ENCODE measurements at regions of chr3 and their contacts with region 1.

Region 1: GRCh38 chr3:190197346-190197763 is 76.7 kb upstream of the P3H2 start:
- DNase-seq: no peak
- H3K4me3 ChIP-seq: no peak overlapping the region
- H3K27ac ChIP-seq: no peak overlapping the region
- H3K4me1 ChIP-seq: no peaks in the 10 kb centered on the region
- H3K27me3 ChIP-seq: no peaks in the 10 kb centered on the region
- CTCF ChIP-seq: no peak

Region 2: GRCh38 chr3:189961525-189962161 is 235.7 kb before region 1 on chr3:
- CTCF ChIA-PET with region 1: no interaction called
- dilution Hi-C with region 1: no loop called
- in situ Hi-C with region 1: loop called (anchors 5 to 10 kb)
- intact Hi-C with region 1: loop called (anchors 1 kb)
- DNase-seq: peak; percentile 82
- H3K4me3 ChIP-seq: no peak overlapping the region
- H3K27ac ChIP-seq: peak overlapping the region; percentile 2
- H3K4me1 ChIP-seq: peaks cover 18% of the 10 kb centered on the region
- H3K27me3 ChIP-seq: no peaks in the 10 kb centered on the region
- CTCF ChIP-seq: peak; percentile 90 to 97

Region 3: DNA sequence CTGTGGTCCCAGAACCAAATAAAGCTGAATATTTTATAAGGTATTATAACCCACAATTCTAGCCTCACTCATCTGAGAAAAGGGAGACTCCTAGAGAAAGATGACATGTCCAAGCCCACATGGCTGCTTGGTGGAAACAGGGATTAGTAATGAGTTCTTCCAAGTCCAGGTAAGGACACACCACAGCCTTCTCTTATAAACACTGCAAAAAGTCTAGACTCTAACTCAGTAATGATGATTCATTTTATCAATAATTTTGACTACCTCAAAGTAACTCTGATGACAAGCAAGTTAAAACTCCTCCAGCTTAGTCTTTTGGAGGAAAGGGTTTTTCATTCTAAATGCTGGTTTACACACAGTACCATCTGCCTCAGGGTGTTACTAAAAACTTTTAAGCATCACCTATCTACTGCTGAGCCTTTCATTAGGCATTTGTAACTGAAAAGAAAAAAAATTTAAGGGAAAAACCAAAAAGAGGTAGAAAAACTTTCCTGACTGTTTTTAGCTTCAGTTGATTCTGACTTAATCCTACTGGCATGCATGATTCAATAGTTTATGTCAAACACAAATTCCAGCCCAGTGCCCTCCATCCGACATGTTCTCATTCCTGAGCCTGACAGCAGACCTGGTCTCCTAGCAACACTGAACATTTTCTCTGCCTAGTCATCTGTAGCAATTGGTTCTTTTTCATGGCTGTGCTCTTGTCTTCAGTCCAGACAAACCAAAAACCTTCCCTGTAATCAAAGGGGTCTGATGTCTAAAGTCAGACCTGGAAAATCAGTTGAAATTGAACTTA is 120.6 kb before region 1 on chr3:
- CTCF ChIA-PET with region 1: no interaction called
- dilution Hi-C with region 1: no loop called
- in situ Hi-C with region 1: no loop called
- intact Hi-C with region 1: loop called (anchors 5 kb)
- DNase-seq: peak; percentile 91
- H3K4me3 ChIP-seq: no peak overlapping the region
- H3K27ac ChIP-seq: peak overlapping the region; percentile 93
- H3K4me1 ChIP-seq: peaks cover 27% of the 10 kb centered on the region
- H3K27me3 ChIP-seq: no peaks in the 10 kb centered on the region
- CTCF ChIP-seq: no peak

Measured in mammary epithelial cell (primary cell).